Activated B cell treated with CpG ODN at 0.5 μM for 24 hours (primary cell): ENCODE measurements at regions of chr1 and their contacts with region 1.

Region 1: GRCh38 chr1:154479764-154480421 is 22.1 kb upstream of the TDRD10 start:
- DNase-seq: no peak
- ATAC-seq: peak; percentile 95
- H3K4me3 Mint-ChIP-seq: no peak overlapping the region
- H3K27ac Mint-ChIP-seq: no peak overlapping the region
- H3K4me1 Mint-ChIP-seq: peaks cover 6% of the 10 kb centered on the region
- H3K27me3 Mint-ChIP-seq: no peaks in the 10 kb centered on the region
- CTCF ChIP-seq: peak; percentile 86

Region 2: DNA sequence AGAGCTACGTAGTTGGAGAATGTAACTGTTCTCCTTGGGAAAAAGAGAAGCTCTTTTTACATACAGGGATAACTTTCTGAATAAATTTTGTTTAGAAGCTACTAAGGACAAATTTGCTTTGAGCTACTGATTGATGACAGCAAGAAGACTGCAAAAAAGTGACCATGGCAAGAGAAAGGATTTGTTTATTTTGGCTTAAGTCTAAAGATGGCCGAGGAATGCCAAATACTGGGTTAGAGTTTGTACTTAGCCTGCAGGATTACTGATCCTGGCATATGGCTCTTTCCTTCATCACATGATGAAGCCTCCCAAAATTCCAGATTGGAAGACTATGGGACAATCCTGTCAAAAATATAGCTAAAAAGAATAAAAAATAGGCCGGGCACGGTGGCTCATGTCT is 460.6 kb before region 1 on chr1:
- CTCF ChIA-PET with region 1: no interaction called
- POLR2A ChIA-PET with region 1: no interaction called
- intact Hi-C with region 1: no loop called
- DNase-seq: no peak
- ATAC-seq: no peak
- H3K4me3 Mint-ChIP-seq: no peak overlapping the region
- H3K27ac Mint-ChIP-seq: no peak overlapping the region
- H3K4me1 Mint-ChIP-seq: no peaks in the 10 kb centered on the region
- H3K27me3 Mint-ChIP-seq: no peaks in the 10 kb centered on the region
- CTCF ChIP-seq: no peak

Region 3: DNA sequence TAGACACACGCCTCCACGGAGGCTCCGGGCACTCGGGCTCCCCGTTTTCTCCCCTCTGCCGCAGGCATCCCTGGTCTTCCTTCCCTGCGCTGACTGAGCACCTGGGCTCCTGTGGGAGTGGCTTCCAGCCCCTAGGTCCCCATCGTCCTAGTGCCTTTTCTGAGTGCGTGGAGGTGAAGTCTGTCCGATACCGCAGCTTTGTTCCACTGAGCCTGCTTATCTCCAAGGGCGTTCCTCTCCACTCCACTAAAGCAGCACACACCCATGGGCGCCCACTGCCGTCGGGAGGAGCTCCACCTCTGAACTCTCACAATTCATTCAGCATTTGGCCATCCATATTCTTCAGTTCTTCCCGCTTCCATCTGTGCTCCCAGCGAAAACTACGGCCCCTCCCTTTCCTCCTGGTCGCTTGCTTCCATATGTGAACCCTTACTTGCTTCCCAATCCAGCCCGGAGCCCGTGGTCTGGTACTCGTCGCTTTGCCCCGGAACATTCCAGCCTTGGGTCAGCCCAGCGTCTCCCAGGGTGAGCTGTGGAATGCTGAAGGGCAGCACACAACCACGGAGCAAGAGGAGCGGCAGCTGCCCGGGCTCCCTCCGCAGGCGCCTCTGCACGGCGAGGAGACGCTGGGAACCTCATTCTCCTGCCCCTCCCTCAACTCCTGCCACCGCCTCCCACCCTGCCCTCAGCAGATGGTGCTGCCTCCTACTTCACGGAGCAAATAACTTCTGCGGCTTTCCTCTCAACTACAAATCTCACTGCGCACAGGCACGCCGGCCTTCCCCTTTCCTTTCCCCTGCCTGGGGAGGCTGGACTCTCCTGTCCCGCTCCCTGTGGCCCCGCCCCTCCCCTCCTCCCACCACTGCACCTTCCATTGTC is 127.1 kb before region 1 on chr1:
- CTCF ChIA-PET with region 1: no interaction called
- POLR2A ChIA-PET with region 1: no interaction called
- intact Hi-C with region 1: loop called (anchors 10 kb)
- DNase-seq: peak; percentile 22
- ATAC-seq: peak; percentile 71
- H3K4me3 Mint-ChIP-seq: peak overlapping the region; percentile 80
- H3K27ac Mint-ChIP-seq: peak overlapping the region; percentile 41
- H3K4me1 Mint-ChIP-seq: peaks cover 18% of the 10 kb centered on the region
- H3K27me3 Mint-ChIP-seq: peaks cover 21% of the 10 kb centered on the region
- CTCF ChIP-seq: no peak

Region 4: GRCh38 chr1:154445040-154445472 is 34.8 kb before region 1 on chr1:
- CTCF ChIA-PET with region 1: no interaction called
- POLR2A ChIA-PET with region 1: no interaction called
- intact Hi-C with region 1: no loop called
- DNase-seq: no peak
- ATAC-seq: no peak
- H3K4me3 Mint-ChIP-seq: no peak overlapping the region
- H3K27ac Mint-ChIP-seq: no peak overlapping the region
- H3K4me1 Mint-ChIP-seq: peaks cover 8% of the 10 kb centered on the region
- H3K27me3 Mint-ChIP-seq: no peaks in the 10 kb centered on the region
- CTCF ChIP-seq: no peak

Region 5: DNA sequence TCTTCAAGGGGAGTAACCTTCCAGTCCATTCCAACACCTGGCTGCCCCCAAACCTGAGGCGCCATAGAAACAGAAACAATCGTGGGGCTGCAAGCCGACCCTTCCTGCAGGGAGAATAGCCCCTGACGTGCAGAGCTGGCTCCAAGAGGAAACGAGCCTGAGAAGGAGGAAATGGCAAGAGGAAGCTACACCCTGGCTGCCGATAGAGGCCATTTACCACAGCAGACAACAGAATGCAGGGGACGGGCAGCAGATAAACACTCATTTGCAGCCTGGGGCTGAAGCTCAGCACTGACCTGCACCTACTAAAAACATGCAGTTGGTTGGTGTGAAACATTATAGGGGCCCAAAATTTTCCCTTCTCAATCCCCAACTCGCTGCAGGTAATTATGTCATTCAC is 13.4 kb after region 1 on chr1:
- CTCF ChIA-PET with region 1: interaction called, 9 read pairs
- POLR2A ChIA-PET with region 1: interaction called, 12 read pairs
- intact Hi-C with region 1: no loop called
- DNase-seq: no peak
- ATAC-seq: peak; percentile 55
- H3K4me3 Mint-ChIP-seq: peak overlapping the region; percentile 73
- H3K27ac Mint-ChIP-seq: peak overlapping the region; percentile 85
- H3K4me1 Mint-ChIP-seq: peaks cover 65% of the 10 kb centered on the region
- H3K27me3 Mint-ChIP-seq: no peaks in the 10 kb centered on the region
- CTCF ChIP-seq: no peak

Region 6: GRCh38 chr1:154546264-154547063 is 66.6 kb after region 1 on chr1:
- CTCF ChIA-PET with region 1: interaction called, 101 read pairs
- POLR2A ChIA-PET with region 1: interaction called, 3 read pairs
- intact Hi-C with region 1: loop called (anchors 1 kb)
- DNase-seq: peak; percentile 27
- ATAC-seq: peak; percentile 97
- H3K4me3 Mint-ChIP-seq: no peak overlapping the region
- H3K27ac Mint-ChIP-seq: no peak overlapping the region
- H3K4me1 Mint-ChIP-seq: peaks cover 5% of the 10 kb centered on the region
- H3K27me3 Mint-ChIP-seq: no peaks in the 10 kb centered on the region
- CTCF ChIP-seq: no peak

Region 7: DNA sequence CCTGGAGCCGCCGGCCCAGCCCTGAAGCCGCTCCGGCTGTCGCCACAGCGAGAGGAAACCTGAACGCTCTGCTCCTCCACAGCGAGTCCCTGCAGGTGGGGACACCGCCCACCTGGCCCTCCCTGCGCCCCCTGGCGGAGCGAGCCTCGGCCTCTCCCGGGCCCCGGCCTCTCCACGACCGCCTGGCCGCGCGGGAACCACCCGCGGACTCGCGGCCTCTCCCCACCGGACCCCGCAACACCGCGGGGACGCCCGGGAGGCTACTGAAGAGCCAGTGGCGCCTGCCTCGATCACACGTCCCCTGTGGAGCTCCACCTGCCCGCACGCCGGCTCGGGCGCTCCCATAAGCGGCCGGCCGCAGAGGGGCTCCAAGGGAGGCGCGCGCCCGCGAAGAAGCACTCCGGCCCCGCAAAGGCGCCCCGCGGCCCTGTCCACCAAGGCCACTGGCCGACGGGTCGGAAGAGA is 280.6 kb after region 1 on chr1:
- CTCF ChIA-PET with region 1: interaction called, 28 read pairs
- POLR2A ChIA-PET with region 1: no interaction called
- intact Hi-C with region 1: loop called (anchors 1 kb)
- DNase-seq: peak; percentile 86
- ATAC-seq: peak; percentile 98
- H3K4me3 Mint-ChIP-seq: no peak overlapping the region
- H3K27ac Mint-ChIP-seq: no peak overlapping the region
- H3K4me1 Mint-ChIP-seq: no peaks in the 10 kb centered on the region
- H3K27me3 Mint-ChIP-seq: peaks cover 27% of the 10 kb centered on the region
- CTCF ChIP-seq: no peak

Region 8: DNA sequence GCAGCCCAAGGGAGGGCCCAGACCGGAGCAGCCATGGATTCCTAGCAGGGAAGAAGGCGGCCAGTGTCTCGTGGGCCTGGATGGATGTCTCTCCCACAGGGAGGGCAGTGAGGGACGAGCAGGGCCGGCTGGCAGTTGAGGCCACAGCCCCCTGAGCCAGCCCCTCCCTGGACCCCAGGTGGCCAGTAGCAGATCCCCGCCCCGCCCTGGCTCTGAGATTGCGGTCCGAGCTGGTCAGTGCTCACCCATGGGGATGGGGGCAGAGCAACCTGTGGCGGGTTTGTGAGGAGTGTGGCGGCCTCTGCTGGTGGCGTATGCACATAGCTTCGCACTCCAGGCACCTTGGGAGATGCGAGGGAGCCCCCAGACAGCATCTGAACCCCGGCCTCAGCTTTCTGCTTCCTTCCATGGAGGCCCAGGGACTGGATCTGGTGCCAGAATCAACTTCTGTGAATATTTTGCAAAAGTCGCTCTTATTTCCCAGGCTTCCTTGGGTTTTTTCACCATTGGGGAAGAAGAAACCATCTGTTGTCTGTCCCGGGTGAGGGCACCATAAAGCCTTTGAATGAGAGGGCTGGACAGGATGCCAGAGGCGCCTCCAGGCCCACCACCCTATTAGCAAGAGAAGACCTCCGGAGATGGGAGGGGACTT is 398.6 kb after region 1 on chr1:
- CTCF ChIA-PET with region 1: interaction called, 24 read pairs
- POLR2A ChIA-PET with region 1: no interaction called
- intact Hi-C with region 1: loop called (anchors 1 kb)
- DNase-seq: peak; percentile 64
- ATAC-seq: peak; percentile 99
- H3K4me3 Mint-ChIP-seq: no peak overlapping the region
- H3K27ac Mint-ChIP-seq: no peak overlapping the region
- H3K4me1 Mint-ChIP-seq: no peaks in the 10 kb centered on the region
- H3K27me3 Mint-ChIP-seq: no peaks in the 10 kb centered on the region
- CTCF ChIP-seq: no peak